Caco-2 (cell line): ENCODE measurements at regions of chr6 and their contacts with region 1.

Region 1: DNA sequence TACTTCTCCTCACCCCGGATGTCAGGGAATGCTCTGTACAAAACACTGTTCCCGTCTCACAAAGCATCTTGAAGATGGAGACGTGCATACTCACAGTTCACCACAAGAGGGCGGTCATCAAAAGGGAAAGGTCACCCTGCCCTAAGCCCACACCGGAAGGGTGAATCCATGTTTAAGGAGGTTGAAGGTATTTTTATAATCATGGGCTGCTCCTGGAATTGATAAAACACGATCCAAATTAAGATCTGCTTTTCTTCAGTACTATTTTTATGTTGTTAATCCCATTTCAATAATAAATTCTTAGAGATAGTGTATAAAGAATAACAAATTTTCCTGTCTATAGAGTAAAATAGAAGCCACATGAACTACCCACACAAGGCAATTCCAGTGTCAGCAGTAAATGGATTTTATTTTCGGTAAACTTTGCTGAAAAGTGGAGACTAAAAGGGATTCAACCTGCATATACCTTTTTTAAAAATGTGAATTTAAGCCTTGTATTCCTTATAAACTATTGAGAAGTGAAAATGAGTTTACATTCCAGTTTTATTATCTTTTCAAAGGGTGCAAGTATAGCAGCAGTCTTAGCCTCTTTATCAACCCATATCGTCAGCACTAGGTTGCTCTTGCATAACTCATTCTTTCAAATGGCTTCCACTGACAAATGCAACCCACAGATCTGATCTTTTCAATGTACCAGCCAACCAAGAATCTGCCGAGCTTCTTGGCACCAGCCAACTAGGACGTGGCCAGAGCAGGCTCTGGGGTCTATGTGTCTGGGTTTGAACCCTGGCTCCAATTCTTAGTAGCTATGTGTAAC is 79.7 kb upstream of the MBOAT1 start:
- DNase-seq: peak; percentile 79 to 82
- H3K4me3 ChIP-seq: no peak overlapping the region
- H3K4me3 Mint-ChIP-seq: no peak overlapping the region
- H3K27ac Mint-ChIP-seq: no peak overlapping the region
- H3K4me1 ChIP-seq: no peaks in the 10 kb centered on the region
- H3K4me1 Mint-ChIP-seq: peaks cover 6% of the 10 kb centered on the region
- H3K27me3 ChIP-seq: no peaks in the 10 kb centered on the region
- H3K27me3 Mint-ChIP-seq: no peaks in the 10 kb centered on the region
- CTCF ChIP-seq: peak; percentile 78 to 83

Region 2: GRCh38 chr6:20092071-20092566 is 199.9 kb before region 1 on chr6:
- CTCF ChIA-PET with region 1: no interaction called
- POLR2A ChIA-PET with region 1: no interaction called
- intact Hi-C with region 1: loop called (anchors 1 kb)
- DNase-seq: peak in 1 of 2 experiments; percentile 40
- H3K4me3 ChIP-seq: no peak overlapping the region
- H3K4me3 Mint-ChIP-seq: no peak overlapping the region
- H3K27ac Mint-ChIP-seq: no peak overlapping the region
- H3K4me1 ChIP-seq: no peaks in the 10 kb centered on the region
- H3K4me1 Mint-ChIP-seq: no peaks in the 10 kb centered on the region
- H3K27me3 ChIP-seq: no peaks in the 10 kb centered on the region
- H3K27me3 Mint-ChIP-seq: peaks cover 6% of the 10 kb centered on the region
- CTCF ChIP-seq: peak; percentile 51 to 58

Region 3: GRCh38 chr6:20401205-20402091 is 109.5 kb after region 1 on chr6 and contains the start of gene E2F3:
- CTCF ChIA-PET with region 1: no interaction called
- POLR2A ChIA-PET with region 1: no interaction called
- intact Hi-C with region 1: loop called (anchors 2 kb)
- DNase-seq: peak; percentile 99 to 100
- H3K4me3 ChIP-seq: peak within 1 kb of the TSS; percentile 91
- H3K4me3 Mint-ChIP-seq: peak within 1 kb of the TSS; percentile 91
- H3K27ac Mint-ChIP-seq: peak within 1 kb of the TSS; percentile 97
- H3K4me1 ChIP-seq: peaks cover 7% of the 10 kb centered on the region
- H3K4me1 Mint-ChIP-seq: no peaks in the 10 kb centered on the region
- H3K27me3 ChIP-seq: no peaks in the 10 kb centered on the region
- H3K27me3 Mint-ChIP-seq: no peaks in the 10 kb centered on the region
- CTCF ChIP-seq: no peak
- total RNA-seq, gene E2F3: 15.4 and 16.3 TPM in 2 replicates

Region 4: DNA sequence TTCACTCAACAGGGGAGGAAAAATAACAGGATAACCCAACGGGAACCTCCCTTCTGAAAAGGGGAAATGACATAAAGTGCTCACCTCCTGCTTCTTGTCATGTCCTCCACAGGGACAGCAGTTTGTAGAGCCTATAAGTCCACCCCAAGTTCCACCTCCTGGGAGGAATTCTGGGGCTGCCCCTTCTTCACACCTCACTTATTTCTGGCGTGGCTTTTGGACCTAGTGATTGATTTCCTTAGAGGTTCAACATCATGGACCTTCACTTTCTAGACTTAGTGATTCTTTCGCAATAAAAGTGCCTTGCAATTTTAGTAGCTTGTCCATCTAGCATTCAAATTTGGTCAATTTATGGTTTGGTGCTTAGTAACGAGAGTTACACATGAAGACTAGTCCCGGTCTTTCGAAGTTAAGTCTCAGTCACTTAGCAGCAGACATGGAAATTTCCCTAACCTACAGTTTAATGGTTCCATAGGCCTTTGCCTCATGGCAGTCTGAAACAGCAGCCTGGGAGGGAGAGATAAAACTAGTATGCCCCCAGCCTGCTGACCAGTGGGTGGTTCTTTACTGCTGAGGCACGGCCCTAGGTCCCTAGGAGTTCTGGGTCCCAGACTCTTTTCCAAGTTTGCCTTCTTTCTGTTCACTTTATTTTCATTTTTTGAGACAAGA is 183.0 kb after region 1 on chr6:
- CTCF ChIA-PET with region 1: no interaction called
- POLR2A ChIA-PET with region 1: no interaction called
- intact Hi-C with region 1: no loop called
- DNase-seq: no peak
- H3K4me3 ChIP-seq: no peak overlapping the region
- H3K4me3 Mint-ChIP-seq: no peak overlapping the region
- H3K27ac Mint-ChIP-seq: no peak overlapping the region
- H3K4me1 ChIP-seq: peaks cover 8% of the 10 kb centered on the region
- H3K4me1 Mint-ChIP-seq: no peaks in the 10 kb centered on the region
- H3K27me3 ChIP-seq: no peaks in the 10 kb centered on the region
- H3K27me3 Mint-ChIP-seq: no peaks in the 10 kb centered on the region
- CTCF ChIP-seq: no peak